Ovary (tissue), 10 donors: ENCODE measurements at regions of chr13 and their contacts with region 1.

Region 1: DNA sequence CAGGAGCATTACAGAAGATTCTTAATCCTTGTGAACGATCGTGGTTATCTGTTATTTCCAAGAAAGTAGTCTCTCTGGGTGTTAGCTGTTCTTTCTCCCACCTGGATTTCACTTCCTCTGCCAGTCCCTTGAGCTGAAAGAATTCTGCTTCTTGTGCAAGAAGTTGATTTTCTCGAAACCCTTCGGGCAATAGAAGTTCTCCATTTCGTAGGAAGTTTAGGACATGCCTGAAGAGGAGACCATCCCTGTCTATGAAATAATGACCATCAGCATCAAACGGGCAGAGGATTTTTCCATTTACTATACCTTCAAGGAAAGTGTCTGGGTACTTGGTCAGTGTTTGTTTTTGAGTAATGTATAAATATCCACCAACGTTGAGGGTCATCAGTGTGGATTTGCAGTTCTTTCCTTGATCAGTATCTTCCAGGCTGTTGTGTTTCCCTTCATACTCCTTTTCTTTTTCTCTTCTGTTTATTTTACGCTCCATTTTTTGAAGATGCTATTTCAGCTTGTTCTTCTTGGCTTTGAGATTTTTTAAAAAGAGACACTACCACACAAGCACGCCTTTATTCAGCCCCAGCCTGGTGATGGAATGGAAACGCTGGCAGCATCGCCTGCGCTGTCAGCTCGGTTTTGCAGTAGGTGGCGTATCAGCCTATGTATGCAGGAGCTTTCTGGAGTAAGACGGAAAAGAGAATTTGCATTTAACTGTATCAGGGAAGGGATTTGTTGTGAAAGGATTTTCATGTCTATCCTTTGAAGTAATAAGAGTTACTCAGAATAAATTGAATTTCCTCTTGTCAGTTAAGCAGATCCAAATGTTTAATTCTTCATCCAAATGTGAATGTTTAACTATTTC is 6.5 kb downstream of the KCTD4 start:
- DNase-seq: peak; percentile 24 to 55 (median 52)
- H3K4me3 ChIP-seq: no peak overlapping the region
- H3K27ac ChIP-seq: no peak overlapping the region
- H3K4me1 ChIP-seq: peaks cover 2% of the 10 kb centered on the region
- H3K27me3 ChIP-seq: no peaks in the 10 kb centered on the region
- CTCF ChIP-seq: no peak
- EP300 ChIP-seq: no peak
- POLR2A ChIP-seq: no peak

Region 2: DNA sequence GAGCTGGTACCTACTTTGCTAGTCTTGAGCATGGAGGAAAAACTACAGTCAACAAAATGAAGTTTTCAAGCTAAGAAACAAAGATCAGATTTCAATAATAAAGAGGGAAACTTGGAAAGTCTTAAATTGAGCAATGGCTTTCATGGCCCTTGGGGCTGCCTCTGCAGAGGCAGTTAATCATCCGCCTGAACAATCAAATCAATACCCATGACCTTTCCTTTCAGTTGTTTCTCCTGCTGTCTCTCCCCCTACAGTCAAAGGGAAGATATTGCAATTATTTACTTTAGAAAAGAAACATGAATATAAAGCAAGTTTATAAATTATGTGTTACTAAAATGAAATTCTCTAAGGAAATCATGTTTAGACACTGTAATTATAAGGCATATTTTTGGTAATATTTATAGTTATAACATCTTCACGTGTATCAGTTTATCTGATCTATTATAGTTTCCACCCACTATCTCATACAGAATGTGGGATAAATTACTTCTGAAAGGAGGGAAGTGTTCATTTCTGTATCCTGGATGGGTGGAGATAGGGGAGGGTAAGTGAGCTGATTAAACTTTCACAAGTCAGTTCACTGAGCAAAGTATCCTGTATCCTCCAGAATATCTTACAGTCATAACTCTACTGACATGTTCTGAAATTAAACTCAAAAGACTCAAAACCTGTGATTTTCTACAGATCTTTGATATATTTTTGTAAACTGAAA is 545.8 kb before region 1 on chr13:
- intact Hi-C with region 1: no loop called
- DNase-seq: no peak
- H3K4me3 ChIP-seq: no peak overlapping the region
- H3K27ac ChIP-seq: no peak overlapping the region
- H3K4me1 ChIP-seq: no peaks in the 10 kb centered on the region
- H3K27me3 ChIP-seq: no peaks in the 10 kb centered on the region
- CTCF ChIP-seq: no peak
- EP300 ChIP-seq: no peak
- POLR2A ChIP-seq: no peak

Region 3: DNA sequence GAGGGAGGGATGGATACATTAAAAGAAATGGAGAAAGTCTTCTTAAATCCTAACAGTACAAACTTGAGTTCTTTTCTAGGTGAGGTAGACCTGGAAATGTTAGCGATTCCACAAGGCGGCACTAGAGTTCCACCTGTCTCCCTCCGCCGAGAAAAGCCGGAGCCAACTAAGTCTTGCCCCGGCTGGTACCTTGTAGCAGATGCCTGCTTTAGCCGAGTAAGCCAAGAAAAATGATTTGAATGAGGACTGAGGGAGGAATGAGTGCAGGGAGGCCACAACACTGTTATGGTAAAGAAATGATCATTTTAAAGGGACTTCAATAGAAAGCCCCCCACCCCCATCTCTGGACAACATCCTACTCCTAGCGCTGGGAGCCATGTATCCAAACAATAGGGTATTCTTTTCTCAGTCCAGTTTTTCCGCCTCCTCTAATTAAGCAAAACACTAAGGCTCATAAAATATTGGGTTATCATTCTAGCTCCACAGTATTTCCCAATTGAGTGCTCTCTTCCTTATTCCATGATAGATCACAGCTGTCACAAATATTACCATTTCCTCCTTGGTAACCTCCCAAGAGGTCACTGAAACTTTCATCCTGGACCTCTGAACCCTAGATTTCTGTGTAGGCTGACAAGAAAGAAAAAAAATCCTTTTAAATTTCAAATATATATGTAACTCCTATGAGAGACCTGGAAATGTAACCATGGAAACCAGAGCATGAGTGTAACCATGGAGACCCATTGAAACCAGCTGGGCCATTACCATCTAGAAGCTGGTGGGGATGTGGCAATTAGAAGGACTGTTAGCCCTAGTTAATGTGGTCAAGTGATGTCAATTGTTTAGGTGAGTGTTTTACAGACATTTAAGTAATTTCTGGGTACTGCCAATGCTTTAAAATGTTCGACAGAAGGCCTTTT is 146.7 kb before region 1 on chr13:
- intact Hi-C with region 1: no loop called
- DNase-seq: peak; percentile 59 to 79 (median 74)
- H3K4me3 ChIP-seq: peak overlapping the region; percentile 15
- H3K27ac ChIP-seq: no peak overlapping the region
- H3K4me1 ChIP-seq: no peaks in the 10 kb centered on the region
- H3K27me3 ChIP-seq: no peaks in the 10 kb centered on the region
- CTCF ChIP-seq: peak; percentile 57 to 83 (median 82)
- EP300 ChIP-seq: no peak
- POLR2A ChIP-seq: no peak

Region 4: DNA sequence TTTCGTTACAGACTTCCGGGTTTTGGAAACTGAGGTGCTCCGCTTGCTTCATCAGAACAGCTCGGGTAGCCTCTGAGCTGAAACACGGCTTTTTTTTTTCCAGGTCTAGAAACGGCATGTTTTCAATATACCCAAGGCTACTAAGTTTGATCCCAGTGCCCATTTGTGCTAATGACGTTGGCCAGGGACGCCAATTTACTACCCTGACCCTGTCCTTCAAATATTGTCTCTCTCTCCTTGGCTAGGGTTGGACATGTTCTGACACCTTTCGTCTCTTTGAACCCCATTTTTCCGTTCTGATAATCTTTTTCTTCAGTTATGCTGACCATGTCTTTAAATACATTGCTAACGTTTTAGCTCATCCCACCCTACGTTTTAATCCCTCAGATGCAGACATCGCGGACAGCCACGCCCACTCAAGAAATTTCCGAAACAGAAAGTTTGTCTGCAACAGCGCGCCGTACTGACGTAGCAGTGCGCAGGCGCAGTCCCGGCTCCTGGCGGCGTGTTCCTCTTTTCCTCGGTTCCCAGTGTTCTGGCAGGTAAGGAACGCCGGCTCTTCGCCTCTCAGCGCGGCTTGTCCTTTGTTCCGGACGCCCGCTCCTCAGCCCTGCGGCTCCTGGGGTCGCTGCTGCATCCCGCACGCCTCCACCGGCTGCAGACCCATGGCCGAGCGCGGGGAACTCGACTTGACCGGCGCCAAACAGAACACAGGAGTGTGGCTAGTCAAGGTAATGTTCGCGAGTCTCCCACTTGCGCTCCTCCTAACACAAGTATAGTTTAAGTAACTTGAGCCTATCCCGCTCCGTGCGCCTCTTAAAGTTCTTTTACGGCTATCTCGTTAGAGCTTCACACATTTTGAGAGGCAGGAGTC is 74.1 kb before region 1 on chr13 and contains the start of gene GTF2F2:
- intact Hi-C with region 1: no loop called
- DNase-seq: peak; percentile 88 to 94 (median 93)
- H3K4me3 ChIP-seq: peak within 1 kb of the TSS; percentile 90
- H3K27ac ChIP-seq: peak within 1 kb of the TSS in 1 of 2 donors; percentile 83
- H3K4me1 ChIP-seq: peaks cover 10% of the 10 kb centered on the region
- H3K27me3 ChIP-seq: no peaks in the 10 kb centered on the region
- CTCF ChIP-seq: no peak
- EP300 ChIP-seq: no peak
- POLR2A ChIP-seq: no peak
- total RNA-seq, gene GTF2F2: 13.6 to 19.2 (median 14.6) TPM

Region 5: DNA sequence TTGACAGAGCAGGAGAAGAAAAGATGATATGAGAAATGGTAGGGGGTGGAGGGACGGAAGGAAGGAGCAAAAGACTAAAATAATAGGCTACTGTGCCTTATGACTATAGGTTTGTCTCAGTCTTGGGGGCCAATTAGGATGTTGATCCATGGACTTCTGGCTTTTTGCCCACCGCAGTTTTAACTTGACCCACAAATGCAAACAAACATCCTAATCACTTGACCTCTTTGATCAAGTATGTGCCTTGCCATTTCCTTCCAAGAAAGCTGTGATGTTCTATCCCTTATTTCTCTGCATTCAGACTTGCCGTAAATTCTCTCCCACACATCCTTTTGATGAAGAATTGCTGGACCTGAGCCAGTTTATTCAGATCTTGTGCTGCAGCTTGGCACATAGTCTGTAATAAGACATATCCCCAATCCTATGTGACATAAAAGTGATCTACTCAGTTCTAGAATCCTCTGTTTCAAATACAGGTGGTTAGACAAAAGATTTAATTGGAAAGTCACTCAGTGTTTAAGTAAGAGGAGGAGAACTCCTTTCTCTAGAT is 83.9 kb after region 1 on chr13:
- intact Hi-C with region 1: loop called in 1 of 4 experiments (anchors 10 kb)
- DNase-seq: no peak
- H3K4me3 ChIP-seq: no peak overlapping the region
- H3K27ac ChIP-seq: no peak overlapping the region
- H3K4me1 ChIP-seq: no peaks in the 10 kb centered on the region
- H3K27me3 ChIP-seq: no peaks in the 10 kb centered on the region
- CTCF ChIP-seq: no peak
- EP300 ChIP-seq: no peak
- POLR2A ChIP-seq: no peak